ENCODE measurements at regions of chr22 and their contacts with region 1.

Region 1: GRCh38 chr22:38569972-38570778 is at the start of gene DMC1:
- DNase-seq: peak; percentile 100
- H3K4me3 Mint-ChIP-seq: peak within 1 kb of the TSS; percentile 84
- H3K27ac Mint-ChIP-seq: peak within 1 kb of the TSS; percentile 90
- H3K4me1 Mint-ChIP-seq: peaks cover 12% of the 10 kb centered on the region
- H3K27me3 Mint-ChIP-seq: no peaks in the 10 kb centered on the region
- total RNA-seq, gene DMC1: 15.8 to 20.1 TPM

Region 2: DNA sequence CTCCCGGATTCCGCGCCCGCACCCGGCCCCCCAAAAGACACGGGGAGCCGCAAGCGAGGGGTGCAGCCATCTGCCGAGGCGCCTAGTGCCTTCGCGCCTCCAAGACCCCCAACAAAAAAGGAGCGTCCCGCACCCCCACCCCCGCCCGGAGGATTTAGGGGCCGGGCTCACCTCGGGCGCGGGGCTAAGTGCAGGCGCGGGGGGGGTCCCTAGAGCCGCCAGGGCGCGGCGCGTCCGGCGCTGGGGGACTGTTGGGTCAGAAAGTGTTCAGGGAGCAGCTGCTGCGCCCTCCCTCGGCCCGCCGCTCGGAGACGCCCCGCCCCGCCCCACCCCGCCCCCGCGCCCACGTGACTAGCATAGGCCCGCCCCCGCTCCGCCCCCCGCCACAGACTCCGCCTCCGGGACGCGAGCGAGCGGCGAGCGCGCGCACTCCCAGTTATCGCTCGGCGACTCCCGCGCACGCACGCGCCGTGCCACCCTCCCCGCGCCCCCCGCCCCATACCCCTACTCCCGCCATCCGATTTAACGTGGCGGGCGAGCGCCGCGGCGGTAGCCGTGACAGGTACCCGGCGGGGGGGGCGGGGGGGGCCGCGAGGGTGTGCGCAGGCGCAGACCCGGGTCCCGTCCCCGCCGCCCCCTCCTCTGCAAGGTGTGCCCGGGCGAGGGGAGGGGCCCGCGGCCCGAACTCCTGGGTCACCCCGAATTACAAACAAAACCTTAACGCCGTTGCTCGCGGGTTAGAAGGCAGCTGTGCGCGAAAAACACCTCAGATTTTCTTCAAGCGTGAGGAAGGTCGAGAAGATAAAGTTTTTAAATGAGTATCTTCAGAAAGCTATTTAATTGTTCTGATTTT is 171.3 kb before region 1 on chr22:
- CTCF ChIA-PET with region 1: no interaction called
- POLR2A ChIA-PET with region 1: no interaction called
- intact Hi-C with region 1: loop called (anchors 5 kb)
- DNase-seq: peak; percentile 85
- H3K4me3 Mint-ChIP-seq: peak overlapping the region; percentile 73
- H3K27ac Mint-ChIP-seq: peak overlapping the region; percentile 56
- H3K4me1 Mint-ChIP-seq: peaks cover 28% of the 10 kb centered on the region
- H3K27me3 Mint-ChIP-seq: peaks cover 2% of the 10 kb centered on the region

Region 3: GRCh38 chr22:38412435-38413084 is 157.6 kb before region 1 on chr22:
- CTCF ChIA-PET with region 1: interaction called, 16 read pairs
- POLR2A ChIA-PET with region 1: no interaction called
- intact Hi-C with region 1: loop called (anchors 5 kb)
- DNase-seq: peak; percentile 59
- H3K4me3 Mint-ChIP-seq: no peak overlapping the region
- H3K27ac Mint-ChIP-seq: no peak overlapping the region
- H3K4me1 Mint-ChIP-seq: peaks cover 3% of the 10 kb centered on the region
- H3K27me3 Mint-ChIP-seq: peaks cover 7% of the 10 kb centered on the region

Region 4: DNA sequence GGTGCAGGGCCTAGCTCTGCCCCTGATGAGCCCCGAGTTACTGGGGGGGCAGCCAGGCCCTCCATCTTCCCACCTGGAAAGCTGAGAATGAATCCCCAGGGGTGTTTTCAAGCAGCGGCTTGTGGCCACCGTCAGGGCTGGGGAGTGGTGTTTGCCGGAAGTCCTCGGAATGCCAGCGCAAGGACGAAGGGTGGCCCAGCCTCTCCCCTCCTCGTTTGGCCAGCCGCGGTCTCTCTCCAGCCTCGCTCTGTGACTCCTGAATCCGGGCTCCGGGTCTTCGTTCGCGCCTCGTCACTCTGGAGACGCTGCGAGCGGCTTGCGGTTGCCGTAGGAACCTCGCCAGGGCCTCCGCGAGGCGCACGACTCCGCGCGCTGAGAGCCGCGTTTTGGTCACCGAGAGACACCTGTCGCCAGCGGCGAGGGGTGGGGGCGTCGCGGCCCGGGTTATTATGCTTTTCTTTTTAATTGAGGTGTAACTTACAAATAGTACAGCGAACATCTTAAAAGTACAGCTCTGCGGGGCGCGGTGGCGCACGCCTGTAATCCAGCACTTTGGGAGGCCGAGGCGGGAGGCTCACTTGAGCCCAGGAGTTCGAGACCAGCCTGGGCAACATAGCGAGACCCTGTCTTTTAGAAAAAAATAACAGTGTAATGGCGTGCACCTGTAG is 108.6 kb before region 1 on chr22:
- CTCF ChIA-PET with region 1: no interaction called
- POLR2A ChIA-PET with region 1: no interaction called
- intact Hi-C with region 1: loop called (anchors 5 kb)
- DNase-seq: peak; percentile 78
- H3K4me3 Mint-ChIP-seq: no peak overlapping the region
- H3K27ac Mint-ChIP-seq: no peak overlapping the region
- H3K4me1 Mint-ChIP-seq: peaks cover 1% of the 10 kb centered on the region
- H3K27me3 Mint-ChIP-seq: peaks cover 64% of the 10 kb centered on the region

Region 5: GRCh38 chr22:38497869-38498268 is 72.3 kb before region 1 on chr22:
- CTCF ChIA-PET with region 1: interaction called, 12 read pairs
- POLR2A ChIA-PET with region 1: interaction called, 3 read pairs
- intact Hi-C with region 1: no loop called
- DNase-seq: no peak
- H3K4me3 Mint-ChIP-seq: no peak overlapping the region
- H3K27ac Mint-ChIP-seq: peak overlapping the region; percentile 72
- H3K4me1 Mint-ChIP-seq: peaks cover 62% of the 10 kb centered on the region
- H3K27me3 Mint-ChIP-seq: no peaks in the 10 kb centered on the region

Region 6: GRCh38 chr22:38506118-38506962 is 63.8 kb before region 1 on chr22 and contains the start of gene DDX17:
- CTCF ChIA-PET with region 1: interaction called, 3 read pairs
- POLR2A ChIA-PET with region 1: no interaction called
- intact Hi-C with region 1: loop called (anchors 1 kb)
- DNase-seq: peak; percentile 97
- H3K4me3 Mint-ChIP-seq: peak within 1 kb of the TSS; percentile 100
- H3K27ac Mint-ChIP-seq: peak within 1 kb of the TSS; percentile 100
- H3K4me1 Mint-ChIP-seq: peaks cover 41% of the 10 kb centered on the region
- H3K27me3 Mint-ChIP-seq: no peaks in the 10 kb centered on the region
- total RNA-seq, gene DDX17: 353 to 358 TPM

Region 7: GRCh38 chr22:38631724-38632123 is 61.5 kb after region 1 on chr22:
- CTCF ChIA-PET with region 1: no interaction called
- POLR2A ChIA-PET with region 1: no interaction called
- intact Hi-C with region 1: no loop called
- DNase-seq: no peak
- H3K4me3 Mint-ChIP-seq: no peak overlapping the region
- H3K27ac Mint-ChIP-seq: no peak overlapping the region
- H3K4me1 Mint-ChIP-seq: peaks cover 7% of the 10 kb centered on the region
- H3K27me3 Mint-ChIP-seq: no peaks in the 10 kb centered on the region

Region 8: DNA sequence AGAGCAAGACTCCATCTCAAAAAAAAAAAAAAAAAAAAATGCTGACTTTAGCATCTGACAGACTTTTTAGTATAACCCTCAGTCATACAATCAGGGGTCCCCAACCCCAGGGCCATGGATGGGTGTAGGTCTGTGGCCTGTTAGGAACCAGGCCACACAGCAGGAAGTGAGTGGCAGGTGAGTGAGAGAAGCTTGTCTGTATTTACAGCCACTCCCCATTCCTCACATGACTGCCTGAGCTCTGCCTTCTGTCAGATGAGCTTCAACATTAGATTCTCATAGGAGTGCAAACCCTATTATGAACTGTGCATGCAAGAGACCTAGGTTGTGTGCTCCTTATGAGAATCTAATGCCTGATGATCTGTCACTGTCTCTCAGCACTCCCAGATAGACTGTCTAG is 82.7 kb after region 1 on chr22:
- CTCF ChIA-PET with region 1: no interaction called
- POLR2A ChIA-PET with region 1: no interaction called
- intact Hi-C with region 1: no loop called
- DNase-seq: no peak
- H3K4me3 Mint-ChIP-seq: no peak overlapping the region
- H3K27ac Mint-ChIP-seq: no peak overlapping the region
- H3K4me1 Mint-ChIP-seq: peaks cover 9% of the 10 kb centered on the region
- H3K27me3 Mint-ChIP-seq: no peaks in the 10 kb centered on the region